Ovary (tissue), 10 donors: ENCODE measurements at regions of chr10 and their contacts with region 1.

Region 1: GRCh38 chr10:5486853-5487235 is 12.5 kb downstream of the CALML5 start:
- DNase-seq: peak in 1 of 5 donors; percentile 23
- H3K4me3 ChIP-seq: no peak overlapping the region
- H3K27ac ChIP-seq: no peak overlapping the region
- H3K4me1 ChIP-seq: no peaks in the 10 kb centered on the region
- H3K27me3 ChIP-seq: no peaks in the 10 kb centered on the region
- CTCF ChIP-seq: no peak
- EP300 ChIP-seq: no peak
- POLR2A ChIP-seq: no peak

Region 2: GRCh38 chr10:5522960-5523560 is 36.2 kb after region 1 on chr10:
- intact Hi-C with region 1: loop called in 1 of 4 experiments (anchors 1 kb)
- DNase-seq: peak in 1 of 5 donors; percentile 9
- H3K4me3 ChIP-seq: no peak overlapping the region
- H3K27ac ChIP-seq: no peak overlapping the region
- H3K4me1 ChIP-seq: no peaks in the 10 kb centered on the region
- H3K27me3 ChIP-seq: no peaks in the 10 kb centered on the region
- CTCF ChIP-seq: no peak
- EP300 ChIP-seq: no peak
- POLR2A ChIP-seq: no peak